Naive thymus-derived CD4-positive, alpha-beta T cell (primary cell): ENCODE measurements at regions of chr3 and their contacts with region 1.

Region 1: DNA sequence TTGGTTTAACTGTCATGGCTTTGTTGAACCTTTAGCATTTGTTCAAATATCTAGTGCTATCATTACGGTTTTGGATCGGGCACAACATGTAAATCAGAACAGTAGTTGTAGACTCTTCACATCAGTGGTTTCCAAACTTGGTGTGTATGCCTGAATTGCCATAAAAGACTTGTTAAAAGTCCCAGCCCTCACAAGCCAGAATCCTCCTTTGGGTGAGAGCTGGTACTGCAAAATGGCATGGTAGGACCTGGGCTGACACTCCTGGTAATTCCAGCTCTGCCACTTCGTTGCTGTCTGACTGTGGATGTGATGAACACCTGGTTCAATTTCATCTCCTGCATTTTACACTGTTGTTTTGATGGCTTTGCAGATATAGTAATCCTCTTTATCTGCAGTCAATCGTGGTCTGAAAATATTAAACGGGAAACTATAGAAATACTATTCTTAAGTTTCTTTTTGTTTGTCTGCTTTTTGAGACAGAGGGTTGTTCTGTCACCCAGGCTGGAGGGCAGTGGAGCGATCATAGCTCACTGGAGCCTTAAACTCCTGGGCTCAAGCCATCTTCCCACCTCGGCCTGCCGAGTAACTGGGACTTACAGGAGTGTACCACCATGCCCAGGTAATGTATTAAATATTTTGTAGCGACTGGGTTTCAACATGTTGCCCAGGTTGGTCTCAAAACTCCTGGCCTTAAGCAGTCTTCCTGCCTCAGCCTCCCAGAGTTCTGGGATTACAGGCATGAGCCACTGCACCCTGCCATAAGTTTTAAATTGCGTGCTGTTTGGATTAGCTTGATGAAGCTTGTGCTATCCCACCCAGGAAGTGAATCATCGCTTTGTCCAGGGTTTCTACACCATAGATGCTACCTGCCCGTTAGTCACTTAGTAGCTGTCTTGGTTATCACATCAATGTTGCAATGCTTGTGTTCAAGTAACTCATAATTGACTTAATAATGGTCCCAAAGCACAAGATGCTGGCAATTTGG is 61.6 kb downstream of the RAB7A start:
- DNase-seq: peak in 5 of 9 donors; percentile 23 to 37 (median 30)
- ATAC-seq: peak; percentile 63
- H3K4me3 ChIP-seq: peak overlapping the region; percentile 8
- H3K4me3 Mint-ChIP-seq: peak overlapping the region; percentile 48 to 88 (median 84)
- H3K27ac ChIP-seq: peak overlapping the region; percentile 66
- H3K27ac Mint-ChIP-seq: peak overlapping the region; percentile 83 to 97 (median 96)
- H3K4me1 ChIP-seq: peaks cover 35 to 74% of the 10 kb centered on the region in 2 donors
- H3K4me1 Mint-ChIP-seq: peaks cover 67 to 98% (median 85%) of the 10 kb centered on the region in 7 donors
- H3K27me3 ChIP-seq: no peaks in the 10 kb centered on the region
- H3K27me3 Mint-ChIP-seq: no peaks in the 10 kb centered on the region

Region 2: GRCh38 chr3:128753715-128754114 is 33.8 kb before region 1 on chr3:
- CTCF ChIA-PET with region 1: no interaction called
- POLR2A ChIA-PET with region 1: no interaction called
- intact Hi-C with region 1: loop called in 1 of 2 experiments (anchors 5 kb)
- DNase-seq: no peak
- ATAC-seq: no peak
- H3K4me3 ChIP-seq: no peak overlapping the region
- H3K4me3 Mint-ChIP-seq: peak overlapping the region in 3 of 10 donors; percentile 24 to 50 (median 33)
- H3K27ac ChIP-seq: no peak overlapping the region
- H3K27ac Mint-ChIP-seq: peak overlapping the region in 6 of 9 donors; percentile 38 to 89 (median 69)
- H3K4me1 ChIP-seq: peaks cover 23 to 28% of the 10 kb centered on the region in 2 donors
- H3K4me1 Mint-ChIP-seq: peaks cover 52 to 84% (median 74%) of the 10 kb centered on the region in 7 donors
- H3K27me3 ChIP-seq: no peaks in the 10 kb centered on the region
- H3K27me3 Mint-ChIP-seq: no peaks in the 10 kb centered on the region

Region 3: DNA sequence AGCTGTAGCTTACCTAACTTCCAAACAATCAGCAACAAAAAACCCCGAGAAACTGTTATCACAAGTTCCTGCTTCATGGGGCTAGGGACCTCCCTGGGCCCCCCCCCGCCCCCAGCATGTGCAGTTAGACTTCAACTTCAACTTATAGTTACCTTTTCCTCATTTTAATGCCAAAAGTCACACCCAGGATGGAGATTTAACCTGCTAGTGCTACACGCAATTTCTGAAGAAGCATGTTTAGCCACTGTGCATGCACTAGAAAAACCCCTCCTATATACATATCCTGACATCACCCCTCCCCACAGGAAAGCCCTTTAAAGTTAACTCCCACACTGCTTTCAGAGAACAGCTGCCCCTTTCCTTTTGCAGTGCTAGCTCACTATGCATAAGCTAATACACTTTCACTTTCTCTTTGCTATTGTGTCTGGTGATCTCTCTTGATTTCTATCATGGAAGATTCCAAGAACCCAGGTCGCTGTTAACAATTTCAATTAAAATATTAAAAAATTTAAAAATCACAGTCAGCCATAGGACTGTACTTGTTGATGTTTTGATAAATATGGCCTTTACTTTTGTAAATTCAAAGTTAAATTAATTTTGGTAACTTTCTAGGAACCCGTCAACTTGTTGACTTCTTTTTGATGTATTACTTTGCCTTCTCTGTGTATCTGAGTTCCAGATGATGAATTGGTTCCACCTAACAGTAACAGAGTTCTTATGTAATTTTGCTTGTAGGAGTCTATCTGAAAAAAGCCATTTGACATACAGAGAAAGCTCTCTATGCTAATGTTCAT is 16.7 kb after region 1 on chr3:
- CTCF ChIA-PET with region 1: interaction called, 9 read pairs
- POLR2A ChIA-PET with region 1: interaction called, 35 read pairs
- intact Hi-C with region 1: loop called (anchors 1 kb)
- DNase-seq: peak in 8 of 9 donors; percentile 54 to 88 (median 84)
- ATAC-seq: peak; percentile 92
- H3K4me3 ChIP-seq: peak overlapping the region; percentile 49
- H3K4me3 Mint-ChIP-seq: peak overlapping the region; percentile 48 to 89 (median 80)
- H3K27ac ChIP-seq: peak overlapping the region; percentile 74
- H3K27ac Mint-ChIP-seq: peak overlapping the region; percentile 91 to 98 (median 96)
- H3K4me1 ChIP-seq: peaks cover 22 to 64% of the 10 kb centered on the region in 2 donors
- H3K4me1 Mint-ChIP-seq: peaks cover 59 to 91% (median 85%) of the 10 kb centered on the region in 7 donors
- H3K27me3 ChIP-seq: no peaks in the 10 kb centered on the region
- H3K27me3 Mint-ChIP-seq: no peaks in the 10 kb centered on the region

Region 4: DNA sequence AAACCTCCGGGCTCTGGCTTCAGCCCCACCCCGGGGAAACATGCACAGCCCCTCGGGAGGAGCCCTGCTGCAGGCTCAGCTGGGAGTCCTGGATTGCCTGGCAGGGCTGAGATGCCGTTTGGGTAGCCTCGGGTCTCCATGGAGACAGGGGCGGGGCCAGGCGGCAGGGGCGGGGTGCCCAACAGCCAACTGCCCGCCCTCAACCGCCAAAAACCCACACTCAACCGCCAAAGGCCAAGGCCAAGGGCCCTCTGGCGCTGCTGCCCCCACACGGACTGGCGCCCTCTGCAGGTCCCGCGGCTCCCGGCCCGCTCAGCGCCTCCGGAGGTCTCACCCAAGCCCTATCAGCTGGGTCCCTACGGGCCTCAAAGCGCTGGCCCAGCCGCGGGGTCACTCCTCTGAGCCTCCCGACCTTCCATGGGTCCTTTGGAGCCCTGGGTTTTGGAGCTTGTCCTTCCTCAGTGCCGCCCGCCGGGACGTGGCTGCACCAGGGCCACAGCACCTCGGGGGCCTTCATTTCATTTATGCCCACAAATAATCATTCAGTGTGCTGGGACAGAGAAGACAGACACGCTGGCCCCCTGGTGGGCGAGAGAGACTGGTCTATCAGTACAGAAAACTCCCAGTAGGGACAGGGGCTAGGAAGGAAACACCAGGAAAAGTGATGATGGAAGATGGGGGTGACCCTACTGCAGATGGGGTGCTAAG is 58.4 kb after region 1 on chr3:
- CTCF ChIA-PET with region 1: interaction called, 20 read pairs
- POLR2A ChIA-PET with region 1: interaction called, 5 read pairs
- intact Hi-C with region 1: loop called (anchors 1 to 5 kb)
- DNase-seq: peak; percentile 61 to 87 (median 74)
- ATAC-seq: peak; percentile 85
- H3K4me3 ChIP-seq: peak overlapping the region; percentile 65
- H3K4me3 Mint-ChIP-seq: peak overlapping the region; percentile 65 to 88 (median 82)
- H3K27ac ChIP-seq: peak overlapping the region; percentile 64
- H3K27ac Mint-ChIP-seq: peak overlapping the region; percentile 64 to 93 (median 81)
- H3K4me1 ChIP-seq: peaks cover 0 to 14% of the 10 kb centered on the region in 2 donors
- H3K4me1 Mint-ChIP-seq: peaks cover 11 to 22% (median 17%) of the 10 kb centered on the region in 7 donors
- H3K27me3 ChIP-seq: no peaks in the 10 kb centered on the region
- H3K27me3 Mint-ChIP-seq: peaks cover 0 to 2% (median 0%) of the 10 kb centered on the region in 5 donors

Region 5: DNA sequence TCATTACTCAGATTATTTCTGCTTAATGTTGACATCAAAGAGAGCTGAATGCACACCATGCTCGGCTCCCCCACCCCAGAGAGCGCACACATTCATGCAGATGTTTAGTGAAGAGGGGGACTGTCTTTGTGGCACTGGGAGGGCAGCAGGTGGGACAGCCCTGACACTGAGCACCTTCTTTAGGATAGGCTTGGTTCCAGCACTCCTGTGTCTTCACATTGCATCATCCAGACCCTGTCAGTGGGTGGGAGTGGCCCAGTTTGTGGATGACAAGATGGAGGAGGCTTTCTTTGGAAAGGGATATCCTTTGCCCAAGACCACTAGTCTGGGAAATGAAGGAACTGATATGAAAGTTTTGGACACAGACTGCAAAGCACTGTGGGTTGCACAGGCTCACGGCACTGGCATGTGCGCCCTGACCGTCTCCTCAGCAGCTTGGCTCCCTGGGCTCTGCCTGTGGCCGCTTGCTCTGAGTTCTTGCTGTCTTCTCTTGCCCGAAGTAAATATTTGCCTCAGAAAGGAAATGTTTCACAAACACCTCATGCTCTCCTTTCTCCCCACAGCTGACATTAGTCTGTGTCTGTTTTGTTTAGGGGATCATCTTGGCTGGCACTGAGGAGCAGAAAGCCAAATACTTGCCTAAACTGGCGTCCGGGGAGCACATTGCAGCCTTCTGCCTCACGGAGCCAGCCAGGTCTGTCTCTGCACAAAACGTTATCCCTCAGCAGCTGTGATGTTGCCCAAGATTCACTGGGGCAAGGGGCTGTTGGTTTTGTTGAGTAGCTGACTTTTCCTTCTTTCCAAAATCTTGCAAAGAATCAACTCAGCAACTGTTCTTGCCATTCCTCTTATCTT is 108.5 kb after region 1 on chr3:
- CTCF ChIA-PET with region 1: no interaction called
- POLR2A ChIA-PET with region 1: no interaction called
- intact Hi-C with region 1: no loop called
- DNase-seq: no peak
- ATAC-seq: no peak
- H3K4me3 ChIP-seq: no peak overlapping the region
- H3K4me3 Mint-ChIP-seq: no peak overlapping the region
- H3K27ac ChIP-seq: no peak overlapping the region
- H3K27ac Mint-ChIP-seq: peak overlapping the region in 2 of 9 donors; percentile 15 to 51
- H3K4me1 ChIP-seq: no peaks in the 10 kb centered on the region
- H3K4me1 Mint-ChIP-seq: peaks cover 0 to 4% (median 0%) of the 10 kb centered on the region in 7 donors
- H3K27me3 ChIP-seq: no peaks in the 10 kb centered on the region
- H3K27me3 Mint-ChIP-seq: no peaks in the 10 kb centered on the region

Region 6: DNA sequence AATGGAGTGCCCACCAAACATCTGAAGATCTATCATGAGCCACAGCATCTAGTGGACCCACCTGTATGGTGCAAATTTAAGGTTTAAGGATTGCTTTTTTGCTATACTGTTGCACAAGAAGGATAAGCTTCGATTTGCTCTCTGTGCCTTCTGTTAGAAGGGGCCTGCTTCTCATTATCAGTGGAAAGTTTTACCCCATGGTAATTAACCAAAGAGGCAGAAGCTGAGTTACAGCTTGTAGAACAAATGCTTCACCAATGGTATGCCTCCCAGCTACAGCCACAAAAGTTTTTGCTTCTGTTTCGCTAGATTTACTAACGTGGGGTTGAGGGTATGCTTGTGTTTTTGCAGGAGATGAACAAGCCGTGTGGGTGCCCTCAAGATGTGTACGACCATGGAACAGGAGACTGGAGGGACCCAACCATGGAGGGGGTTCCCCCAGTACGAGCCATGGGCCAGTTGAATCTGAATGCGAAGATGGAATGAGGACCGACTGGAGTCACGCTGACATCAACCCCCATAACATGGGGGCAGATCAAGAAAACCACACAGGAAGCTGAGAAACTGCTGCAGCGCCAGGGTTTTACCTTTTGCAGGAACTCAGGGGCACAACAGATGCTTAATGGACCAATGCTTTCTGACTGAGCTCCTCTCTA is 135.4 kb after region 1 on chr3:
- CTCF ChIA-PET with region 1: interaction called, 4 read pairs
- POLR2A ChIA-PET with region 1: no interaction called
- intact Hi-C with region 1: loop called in 1 of 2 experiments (anchors 1 kb)
- DNase-seq: peak in 8 of 9 donors; percentile 60 to 73 (median 69)
- ATAC-seq: peak; percentile 73
- H3K4me3 ChIP-seq: peak overlapping the region; percentile 41
- H3K4me3 Mint-ChIP-seq: peak overlapping the region; percentile 75 to 87 (median 84)
- H3K27ac ChIP-seq: peak overlapping the region; percentile 63
- H3K27ac Mint-ChIP-seq: peak overlapping the region; percentile 75 to 96 (median 89)
- H3K4me1 ChIP-seq: peaks cover 13 to 23% of the 10 kb centered on the region in 2 donors
- H3K4me1 Mint-ChIP-seq: peaks cover 20 to 66% (median 52%) of the 10 kb centered on the region in 7 donors
- H3K27me3 ChIP-seq: no peaks in the 10 kb centered on the region
- H3K27me3 Mint-ChIP-seq: peaks cover 0 to 3% (median 0%) of the 10 kb centered on the region in 5 donors